Heart left ventricle (tissue), 16 donors: ENCODE measurements at regions of chr18 and their contacts with region 1.

Region 1: DNA sequence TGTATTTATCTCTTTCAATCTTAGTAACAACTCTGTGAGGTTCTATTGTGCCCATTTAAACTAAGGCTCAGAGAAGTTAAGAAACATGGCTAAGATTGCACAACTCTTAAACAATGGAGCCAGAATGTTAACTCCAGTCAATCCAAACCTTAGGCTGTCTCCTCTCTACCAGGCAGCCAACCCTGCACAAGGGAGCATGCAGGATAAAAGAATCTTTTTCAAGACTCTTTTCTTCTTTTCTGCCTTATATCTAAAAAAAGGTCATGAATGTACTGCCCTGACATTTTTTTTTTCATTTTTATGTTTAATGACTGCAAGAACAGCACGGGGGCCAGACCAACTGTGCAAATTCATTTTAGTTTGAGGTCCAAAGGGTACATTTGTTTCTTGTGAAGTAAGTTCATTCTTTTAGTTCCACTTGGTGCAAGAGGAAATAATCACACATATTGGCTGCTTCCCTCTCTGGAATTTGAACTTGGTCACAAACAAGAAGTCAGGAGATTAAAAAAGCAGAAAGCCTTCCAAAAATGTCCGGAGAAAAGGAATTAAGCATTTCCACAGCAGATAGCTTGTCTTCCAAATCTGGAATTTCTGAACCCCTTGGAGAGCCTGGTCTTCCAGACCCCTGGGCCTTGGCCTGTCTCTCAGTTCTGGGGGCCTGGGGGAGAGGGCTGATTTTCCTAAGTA is 96.0 kb upstream of the RIOK3 start:
- DNase-seq: no peak
- ATAC-seq: peak in 2 of 4 donors; percentile 24 to 27
- H3K4me3 ChIP-seq: no peak overlapping the region
- H3K27ac ChIP-seq: peak overlapping the region; percentile 39 to 87 (median 67)
- H3K4me1 ChIP-seq: peaks cover 0 to 33% (median 22%) of the 10 kb centered on the region in 12 donors
- H3K27me3 ChIP-seq: no peaks in the 10 kb centered on the region
- CTCF ChIP-seq: peak in 1 of 12 donors; percentile 2
- POLR2A ChIP-seq: no peak

Region 2: GRCh38 chr18:22933206-22933957 is 423.7 kb before region 1 on chr18 and contains the start of gene RBBP8:
- intact Hi-C with region 1: loop called in 1 of 10 experiments (anchors 5 kb)
- DNase-seq: peak; percentile 87 to 93 (median 88)
- ATAC-seq: peak; percentile 92 to 99 (median 98)
- H3K4me3 ChIP-seq: peak within 1 kb of the TSS; percentile 68 to 93 (median 78)
- H3K27ac ChIP-seq: peak within 1 kb of the TSS; percentile 83 to 99 (median 96)
- H3K4me1 ChIP-seq: peaks cover 0 to 18% (median 5%) of the 10 kb centered on the region in 12 donors
- H3K27me3 ChIP-seq: no peaks in the 10 kb centered on the region
- CTCF ChIP-seq: no peak
- POLR2A ChIP-seq: peak in 1 of 2 donors; percentile 63
- total RNA-seq, gene RBBP8: 5.1 to 12.2 (median 8.6) TPM

Region 3: DNA sequence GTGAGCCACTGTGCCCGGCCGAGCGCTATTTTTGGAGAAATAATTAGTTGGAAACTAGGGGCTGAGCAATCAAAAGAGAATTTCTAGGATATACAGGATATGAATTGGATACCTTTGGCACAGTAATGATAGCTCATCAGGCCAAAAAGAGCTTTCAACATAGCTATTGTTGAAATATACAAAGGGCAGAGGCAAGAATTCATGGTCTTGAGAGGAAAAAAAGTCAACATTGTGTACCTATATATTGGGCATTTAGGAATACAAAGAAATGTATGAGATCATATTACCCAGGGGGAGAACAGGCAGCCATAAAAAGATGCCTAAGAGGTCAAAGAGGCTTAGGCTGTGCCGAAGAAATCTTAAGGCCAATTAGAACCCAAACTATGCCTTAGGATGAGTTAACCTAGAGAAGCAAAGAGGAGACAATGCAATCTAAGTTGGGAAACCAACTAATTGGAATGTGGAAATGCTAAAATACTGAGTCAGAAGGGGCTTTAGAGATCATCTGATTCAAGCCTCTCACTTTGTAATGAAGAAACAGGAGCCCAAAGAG is 325.0 kb before region 1 on chr18:
- intact Hi-C with region 1: loop called in 2 of 10 experiments (anchors 5 to 10 kb)
- DNase-seq: no peak
- ATAC-seq: no peak
- H3K4me3 ChIP-seq: no peak overlapping the region
- H3K27ac ChIP-seq: no peak overlapping the region
- H3K4me1 ChIP-seq: no peaks in the 10 kb centered on the region
- H3K27me3 ChIP-seq: no peaks in the 10 kb centered on the region
- CTCF ChIP-seq: no peak
- POLR2A ChIP-seq: no peak

Region 4: DNA sequence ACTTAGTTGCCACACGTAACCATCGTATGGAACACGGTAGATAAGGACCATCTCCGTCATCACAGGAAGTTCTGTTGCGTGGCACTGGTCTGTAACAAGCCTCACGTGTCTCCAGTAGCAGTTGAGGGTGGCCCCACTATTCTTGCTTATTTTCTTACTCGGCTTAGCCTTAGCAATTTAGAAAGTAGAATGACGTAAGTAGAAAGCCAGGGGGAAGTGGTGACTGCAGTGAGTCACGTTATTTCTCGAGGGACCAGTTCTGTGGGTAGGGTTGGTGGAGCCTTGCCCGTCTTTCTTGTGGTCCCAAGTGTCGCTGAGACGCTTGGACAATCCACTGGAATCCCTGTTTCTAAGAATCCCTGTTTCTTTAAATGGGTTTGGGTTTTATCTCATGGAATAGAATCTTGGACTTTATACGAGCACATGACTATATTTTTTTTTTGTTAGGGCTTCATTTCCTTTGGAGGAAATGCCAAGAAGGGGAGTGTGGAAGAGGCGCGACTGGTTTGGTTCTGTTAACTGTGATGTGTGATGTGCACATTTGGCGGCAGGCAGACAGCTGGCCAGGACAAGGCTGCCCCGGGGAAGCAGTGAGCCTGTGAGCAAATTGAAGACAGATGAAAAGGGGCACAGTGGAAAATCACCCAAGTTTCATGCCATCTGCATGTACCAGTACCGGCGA is 125.6 kb before region 1 on chr18:
- intact Hi-C with region 1: loop called in 4 of 10 experiments (anchors 5 to 10 kb)
- DNase-seq: peak in 4 of 5 donors; percentile 69 to 79 (median 75)
- ATAC-seq: peak; percentile 65 to 87 (median 82)
- H3K4me3 ChIP-seq: peak overlapping the region in 1 of 12 donors; percentile 5
- H3K27ac ChIP-seq: peak overlapping the region in 11 of 12 donors; percentile 50 to 90 (median 66)
- H3K4me1 ChIP-seq: peaks cover 0 to 62% (median 36%) of the 10 kb centered on the region in 12 donors
- H3K27me3 ChIP-seq: no peaks in the 10 kb centered on the region
- CTCF ChIP-seq: no peak
- POLR2A ChIP-seq: no peak

Region 5: GRCh38 chr18:23237524-23238151 is 119.4 kb before region 1 on chr18:
- intact Hi-C with region 1: loop called in 3 of 10 experiments (anchors 5 kb)
- DNase-seq: peak; percentile 50 to 79 (median 56)
- ATAC-seq: peak; percentile 65 to 86 (median 80)
- H3K4me3 ChIP-seq: peak overlapping the region in 10 of 12 donors; percentile 15 to 52 (median 40)
- H3K27ac ChIP-seq: peak overlapping the region; percentile 52 to 89 (median 76)
- H3K4me1 ChIP-seq: peaks cover 4 to 29% (median 20%) of the 10 kb centered on the region in 12 donors
- H3K27me3 ChIP-seq: no peaks in the 10 kb centered on the region
- CTCF ChIP-seq: peak in 8 of 12 donors; percentile 7 to 50 (median 26)
- POLR2A ChIP-seq: no peak

Region 6: DNA sequence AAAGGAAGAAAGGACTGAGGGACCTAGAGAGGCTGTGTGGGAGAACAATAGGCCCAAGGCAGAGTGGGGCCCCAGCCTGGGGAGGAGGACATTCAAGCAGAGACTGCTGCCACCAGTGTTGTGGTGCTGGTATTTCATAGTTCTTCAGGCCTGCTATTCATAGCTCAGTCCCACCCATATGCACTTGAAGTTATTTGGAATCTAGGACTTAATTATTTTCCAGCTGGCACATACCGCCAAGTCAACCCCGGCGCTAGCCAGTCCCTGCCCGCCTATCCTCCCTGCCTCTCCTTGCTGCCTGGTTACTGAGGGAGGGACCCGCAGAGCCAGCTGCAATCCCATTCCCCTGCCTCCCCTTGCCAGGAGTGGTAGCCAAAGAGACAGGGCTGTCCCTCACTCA is 80.6 kb before region 1 on chr18:
- intact Hi-C with region 1: loop called in 1 of 10 experiments (anchors 5 kb)
- DNase-seq: peak in 4 of 5 donors; percentile 37 to 72 (median 44)
- ATAC-seq: peak; percentile 93 to 95 (median 93)
- H3K4me3 ChIP-seq: no peak overlapping the region
- H3K27ac ChIP-seq: peak overlapping the region in 7 of 12 donors; percentile 18 to 52 (median 35)
- H3K4me1 ChIP-seq: peaks cover 0 to 23% (median 0%) of the 10 kb centered on the region in 12 donors
- H3K27me3 ChIP-seq: no peaks in the 10 kb centered on the region
- CTCF ChIP-seq: peak in 3 of 12 donors; percentile 24 to 30 (median 28)
- POLR2A ChIP-seq: no peak

Region 7: GRCh38 chr18:23593720-23594119 is 236.7 kb after region 1 on chr18:
- intact Hi-C with region 1: no loop called
- DNase-seq: no peak
- ATAC-seq: no peak
- H3K4me3 ChIP-seq: no peak overlapping the region
- H3K27ac ChIP-seq: peak overlapping the region in 1 of 12 donors; percentile 54
- H3K4me1 ChIP-seq: peaks cover 0 to 11% (median 0%) of the 10 kb centered on the region in 12 donors
- H3K27me3 ChIP-seq: peaks cover 0 to 2% (median 0%) of the 10 kb centered on the region in 9 donors
- CTCF ChIP-seq: no peak
- POLR2A ChIP-seq: no peak

Region 8: GRCh38 chr18:23693845-23694244 is 336.8 kb after region 1 on chr18:
- intact Hi-C with region 1: no loop called
- DNase-seq: no peak
- ATAC-seq: peak; percentile 28 to 58 (median 43)
- H3K4me3 ChIP-seq: no peak overlapping the region
- H3K27ac ChIP-seq: no peak overlapping the region
- H3K4me1 ChIP-seq: peaks cover 0 to 17% (median 3%) of the 10 kb centered on the region in 12 donors
- H3K27me3 ChIP-seq: peaks cover 0 to 29% (median 0%) of the 10 kb centered on the region in 9 donors
- CTCF ChIP-seq: no peak
- POLR2A ChIP-seq: no peak